Prostate gland (tissue), 2 donors: ENCODE measurements at regions of chr12 and their contacts with region 1.

Region 1: GRCh38 chr12:46661110-46661845 is 164.5 kb downstream of the SLC38A4 start:
- DNase-seq: peak; percentile 33
- H3K4me3 ChIP-seq: no peak overlapping the region
- H3K27ac ChIP-seq: peak overlapping the region in 1 of 2 donors; percentile 1
- H3K4me1 ChIP-seq: no peaks in the 10 kb centered on the region
- H3K27me3 ChIP-seq: no peaks in the 10 kb centered on the region
- CTCF ChIP-seq: peak in 3 of 4 experiments; percentile 72 to 84 (median 78)
- POLR2A ChIP-seq: no peak

Region 2: DNA sequence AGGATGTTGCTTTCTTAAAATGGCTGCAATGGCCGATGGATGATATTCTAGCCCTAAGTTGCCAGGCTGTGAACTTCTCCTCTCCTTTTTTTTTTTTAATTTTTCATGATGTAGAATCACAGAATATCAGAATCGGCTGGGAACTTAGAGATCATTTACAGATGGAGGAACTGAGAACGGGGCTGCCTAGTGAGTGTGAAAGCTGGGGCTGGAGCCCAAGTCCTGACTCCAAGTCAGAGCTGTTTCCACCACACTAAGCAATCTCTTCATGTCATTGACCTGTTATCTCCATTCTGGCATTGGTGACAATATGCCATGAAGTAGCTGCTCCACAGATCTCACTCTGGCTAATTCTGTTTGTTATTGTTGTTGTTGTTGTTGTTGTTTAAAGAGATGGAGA is 514.1 kb before region 1 on chr12:
- intact Hi-C with region 1: loop called (anchors 5 kb)
- DNase-seq: no peak
- H3K4me3 ChIP-seq: no peak overlapping the region
- H3K27ac ChIP-seq: no peak overlapping the region
- H3K4me1 ChIP-seq: no peaks in the 10 kb centered on the region
- H3K27me3 ChIP-seq: no peaks in the 10 kb centered on the region
- CTCF ChIP-seq: no peak
- POLR2A ChIP-seq: no peak

Region 3: GRCh38 chr12:46573347-46573658 is 88.0 kb before region 1 on chr12:
- intact Hi-C with region 1: loop called (anchors 10 kb)
- DNase-seq: no peak
- H3K4me3 ChIP-seq: no peak overlapping the region
- H3K27ac ChIP-seq: no peak overlapping the region
- H3K4me1 ChIP-seq: no peaks in the 10 kb centered on the region
- H3K27me3 ChIP-seq: no peaks in the 10 kb centered on the region
- CTCF ChIP-seq: no peak
- POLR2A ChIP-seq: no peak

Region 4: GRCh38 chr12:46635818-46636217 is 25.5 kb before region 1 on chr12:
- intact Hi-C with region 1: no loop called
- DNase-seq: no peak
- H3K4me3 ChIP-seq: no peak overlapping the region
- H3K27ac ChIP-seq: no peak overlapping the region
- H3K4me1 ChIP-seq: no peaks in the 10 kb centered on the region
- H3K27me3 ChIP-seq: no peaks in the 10 kb centered on the region
- CTCF ChIP-seq: no peak
- POLR2A ChIP-seq: no peak

Region 5: GRCh38 chr12:46702581-46703344 is 41.5 kb after region 1 on chr12:
- intact Hi-C with region 1: no loop called
- DNase-seq: peak; percentile 75
- H3K4me3 ChIP-seq: no peak overlapping the region
- H3K27ac ChIP-seq: peak overlapping the region; percentile 14 to 23
- H3K4me1 ChIP-seq: peaks cover 4% of the 10 kb centered on the region
- H3K27me3 ChIP-seq: no peaks in the 10 kb centered on the region
- CTCF ChIP-seq: no peak
- POLR2A ChIP-seq: no peak